ENCODE measurements at regions of chr1 and their contacts with region 1.

Region 1: DNA sequence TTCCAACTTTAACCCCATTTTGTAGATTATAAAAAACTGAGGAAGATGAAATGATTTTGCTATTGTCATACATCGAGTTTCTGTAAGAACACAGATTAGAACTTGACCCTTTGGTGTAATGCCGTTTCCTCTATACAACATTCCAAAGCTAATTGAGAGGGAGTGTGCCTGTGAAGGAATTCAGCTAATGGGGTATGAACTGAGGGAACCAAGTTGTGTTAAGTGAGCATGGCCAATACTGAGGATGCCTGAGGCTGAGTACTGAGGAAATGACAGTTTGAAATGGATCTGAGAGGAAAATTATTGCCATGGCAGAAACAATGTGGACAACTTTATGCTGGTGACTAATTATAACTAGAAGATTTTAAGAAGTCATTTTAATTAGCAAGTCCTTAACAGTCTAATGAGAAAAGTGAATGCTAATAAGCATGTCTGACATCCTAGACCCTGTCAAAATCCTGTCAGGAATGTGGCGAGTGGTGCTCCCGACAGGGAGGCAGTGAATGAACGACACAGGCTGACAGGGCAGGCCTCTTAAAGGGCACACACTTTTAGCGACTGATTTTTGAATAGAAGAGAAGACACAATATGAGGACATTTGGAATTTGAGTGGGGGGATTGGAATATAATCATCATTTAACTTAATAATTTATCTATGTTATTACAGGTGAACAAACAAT is 262.5 kb downstream of the HLX start:
- DNase-seq: no peak
- ATAC-seq: no peak
- H3K4me3 Mint-ChIP-seq: no peak overlapping the region
- H3K27ac Mint-ChIP-seq: no peak overlapping the region
- H3K4me1 Mint-ChIP-seq: peaks cover 5% of the 10 kb centered on the region
- H3K27me3 Mint-ChIP-seq: peaks cover 2% of the 10 kb centered on the region
- CTCF ChIP-seq: no peak

Region 2: GRCh38 chr1:221122501-221122900 is 19.2 kb before region 1 on chr1:
- CTCF ChIA-PET with region 1: no interaction called
- POLR2A ChIA-PET with region 1: no interaction called
- intact Hi-C with region 1: loop called (anchors 2 kb)
- DNase-seq: no peak
- ATAC-seq: no peak
- H3K4me3 Mint-ChIP-seq: no peak overlapping the region
- H3K27ac Mint-ChIP-seq: no peak overlapping the region
- H3K4me1 Mint-ChIP-seq: no peaks in the 10 kb centered on the region
- H3K27me3 Mint-ChIP-seq: peaks cover 6% of the 10 kb centered on the region
- CTCF ChIP-seq: no peak